Activated CD8-positive, alpha-beta T cell treated with anti-CD3 and anti-CD28 coated beads, Interleukin-2, amount 10 ng/mL, durations not matched to agents 7 days and 5 days (primary cell): ENCODE measurements at regions of chr9 and their contacts with region 1.

Region 1: DNA sequence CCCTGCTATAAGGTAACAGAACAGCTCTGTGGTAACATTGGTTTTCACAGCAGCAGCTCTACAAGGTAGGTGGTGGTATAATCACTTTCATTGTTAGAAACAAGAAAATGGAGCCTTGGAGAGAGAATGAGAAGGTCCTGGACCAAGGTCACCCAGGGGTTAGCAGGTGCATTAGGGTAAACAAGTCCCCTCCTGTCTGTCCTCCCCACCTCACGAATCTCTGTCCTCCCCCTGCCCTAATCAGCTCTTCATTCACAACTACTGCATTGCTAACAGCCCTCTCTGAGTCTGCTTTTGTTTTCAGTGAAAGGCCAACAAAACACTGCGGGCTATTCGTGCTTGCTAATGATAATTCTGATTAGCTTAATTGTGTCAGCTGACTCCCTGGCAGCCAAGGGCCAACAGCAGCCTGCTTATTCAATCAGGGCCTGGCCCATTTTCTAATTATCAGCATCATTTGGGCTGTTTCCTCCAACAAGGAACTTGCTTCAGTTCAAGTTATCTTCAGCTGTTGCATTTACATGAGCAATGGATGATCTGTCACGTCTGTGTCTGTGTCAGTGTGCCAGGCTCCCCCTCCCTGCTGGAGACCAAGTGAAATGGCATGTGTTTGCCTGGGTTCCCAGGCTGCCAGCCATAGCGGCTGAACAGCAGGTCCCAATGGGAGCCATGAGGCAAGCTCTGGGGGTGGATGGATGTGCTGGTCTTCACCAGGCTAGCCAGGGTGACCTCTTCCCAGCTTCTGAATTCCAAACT is 56.7 kb upstream of the EQTN start:
- DNase-seq: peak; percentile 42
- ATAC-seq: peak; percentile 85
- H3K4me3 Mint-ChIP-seq: no peak overlapping the region
- H3K27ac Mint-ChIP-seq: peak overlapping the region; percentile 83
- H3K4me1 Mint-ChIP-seq: peaks cover 58% of the 10 kb centered on the region
- H3K27me3 Mint-ChIP-seq: no peaks in the 10 kb centered on the region

Region 2: GRCh38 chr9:27365707-27366376 is 12.2 kb after region 1 on chr9:
- CTCF ChIA-PET with region 1: interaction called, 13 read pairs
- POLR2A ChIA-PET with region 1: interaction called, 3 read pairs
- DNase-seq: peak; percentile 78
- ATAC-seq: peak; percentile 98
- H3K4me3 Mint-ChIP-seq: peak overlapping the region; percentile 55
- H3K27ac Mint-ChIP-seq: peak overlapping the region; percentile 82
- H3K4me1 Mint-ChIP-seq: peaks cover 51% of the 10 kb centered on the region
- H3K27me3 Mint-ChIP-seq: peaks cover 5% of the 10 kb centered on the region